ENCODE measurements at regions of chr3 and their contacts with region 1.

Region 1: GRCh38 chr3:101512396-101512645 is 691 bp downstream of the SENP7 start:
- DNase-seq: no peak
- H3K4me3 ChIP-seq: peak overlapping the region; percentile 83 to 92 (median 91)
- H3K27ac ChIP-seq: peak overlapping the region; percentile 97 to 99
- H3K4me1 ChIP-seq: no peaks in the 10 kb centered on the region
- H3K27me3 ChIP-seq: no peaks in the 10 kb centered on the region
- CTCF ChIP-seq: no peak
- POLR2A ChIP-seq: no peak

Region 2: DNA sequence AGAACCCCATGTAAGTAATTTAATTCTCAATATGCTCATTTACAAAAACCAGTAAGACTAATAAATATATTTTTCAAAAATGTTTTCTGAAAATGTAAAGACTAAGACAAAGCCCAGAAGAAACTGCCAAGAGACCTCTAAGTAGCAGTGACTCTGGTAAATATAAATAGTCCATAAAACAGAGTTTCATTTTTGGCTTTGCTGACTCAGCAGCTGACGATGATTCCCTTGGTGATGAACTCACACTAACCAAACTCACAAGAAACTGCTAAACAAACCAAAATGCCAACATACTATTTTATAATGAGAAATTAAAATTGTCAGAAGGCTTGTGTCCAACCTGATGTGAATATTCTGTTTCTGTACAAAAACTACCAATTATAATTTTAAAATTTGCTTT is 160.5 kb before region 1 on chr3:
- intact Hi-C with region 1: no loop called
- DNase-seq: no peak
- H3K4me3 ChIP-seq: no peak overlapping the region
- H3K27ac ChIP-seq: no peak overlapping the region
- H3K4me1 ChIP-seq: no peaks in the 10 kb centered on the region
- H3K27me3 ChIP-seq: no peaks in the 10 kb centered on the region
- CTCF ChIP-seq: no peak
- POLR2A ChIP-seq: no peak

Region 3: DNA sequence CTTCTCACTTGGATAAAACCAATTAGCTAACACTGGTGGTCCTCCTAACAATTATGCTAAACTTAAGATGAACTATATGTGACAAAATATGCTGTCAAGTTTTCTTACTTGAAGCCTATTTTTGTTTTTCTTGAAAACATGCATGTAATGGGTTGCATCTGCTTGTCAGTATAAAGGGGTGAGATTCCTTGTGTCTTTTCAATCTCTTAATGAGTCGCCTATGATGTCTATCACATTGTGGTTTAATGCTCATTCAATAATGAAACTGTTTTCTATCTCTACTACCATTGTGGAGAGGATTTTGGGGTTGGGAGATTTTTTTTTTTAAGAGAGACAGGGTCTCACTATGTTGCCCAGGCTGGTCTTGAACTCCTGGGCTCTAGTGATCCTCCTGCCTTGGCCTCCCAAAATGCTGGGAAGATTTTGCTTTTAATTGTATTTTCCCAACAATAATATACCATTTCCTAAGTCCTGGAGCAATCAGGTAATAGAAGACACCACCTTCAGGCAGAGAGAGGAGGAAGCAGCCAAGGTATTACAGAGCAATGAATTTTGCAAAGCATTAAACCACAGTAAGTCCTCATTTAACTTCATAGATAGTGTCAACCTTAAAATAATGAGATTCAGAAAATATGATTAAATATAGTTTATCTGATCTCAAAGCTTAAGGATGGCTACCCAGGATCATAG is 32.0 kb after region 1 on chr3:
- intact Hi-C with region 1: loop called (anchors 2 kb)
- DNase-seq: no peak
- H3K4me3 ChIP-seq: no peak overlapping the region
- H3K27ac ChIP-seq: no peak overlapping the region
- H3K4me1 ChIP-seq: no peaks in the 10 kb centered on the region
- H3K27me3 ChIP-seq: no peaks in the 10 kb centered on the region
- CTCF ChIP-seq: no peak
- POLR2A ChIP-seq: no peak

Measured in breast epithelium (tissue), 4 donors.